ENCODE measurements at regions of chr3 and their contacts with region 1.

Region 1: DNA sequence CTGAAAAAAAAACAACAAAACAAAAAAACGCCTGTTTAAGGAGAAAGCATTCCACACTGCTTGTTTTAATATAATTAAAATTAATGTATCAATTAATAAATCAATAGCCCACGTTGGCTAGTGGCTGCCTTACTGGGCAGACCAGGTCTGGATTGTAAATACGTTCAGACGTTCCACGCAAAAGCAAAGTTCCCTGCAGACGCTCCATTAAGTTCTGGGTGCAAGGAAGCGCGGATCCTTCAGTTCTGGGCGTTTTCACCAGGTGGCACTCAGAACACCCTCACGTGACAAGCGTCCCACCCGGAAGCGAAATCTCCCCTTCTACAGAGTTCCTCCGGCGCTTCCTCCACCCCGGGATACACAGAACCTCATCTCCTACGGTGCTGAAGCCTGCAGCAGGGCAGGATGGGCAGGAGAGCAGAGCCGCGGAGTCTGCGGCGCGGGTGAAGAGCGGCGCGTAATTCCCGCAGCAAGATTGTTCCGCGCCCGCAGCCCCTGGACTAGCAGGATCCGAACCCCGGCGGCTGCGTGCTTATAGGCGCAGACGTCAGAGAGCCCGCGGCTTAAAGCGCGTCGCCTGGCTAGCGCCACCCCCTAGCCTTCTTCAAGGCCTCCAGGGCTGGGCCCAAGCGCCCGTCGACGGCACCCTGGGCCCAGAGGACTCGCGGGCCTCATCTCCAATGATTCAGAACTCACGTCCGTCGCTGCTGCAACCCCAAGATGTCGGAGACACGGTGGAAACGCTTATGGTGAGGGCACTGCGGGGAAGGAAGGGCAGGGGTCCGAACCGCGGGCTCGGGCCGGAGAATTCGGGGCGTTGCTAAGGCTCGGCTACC is at the start of gene SLC25A38:
- DNase-seq: peak; percentile 85
- H3K4me3 Mint-ChIP-seq: peak within 1 kb of the TSS; percentile 91
- H3K27ac Mint-ChIP-seq: peak within 1 kb of the TSS; percentile 91
- H3K4me1 Mint-ChIP-seq: peaks cover 30% of the 10 kb centered on the region
- H3K27me3 Mint-ChIP-seq: no peaks in the 10 kb centered on the region
- CTCF ChIP-seq: peak; percentile 8
- total RNA-seq, gene SLC25A38: 37.6 and 45.9 TPM in 2 replicates

Region 2: GRCh38 chr3:39406368-39407258 is 23.4 kb after region 1 on chr3 and contains the start of gene RPSA:
- CTCF ChIA-PET with region 1: interaction called, 5 read pairs
- POLR2A ChIA-PET with region 1: interaction called, 63 read pairs
- intact Hi-C with region 1: loop called (anchors 2 kb)
- DNase-seq: peak; percentile 97
- H3K4me3 Mint-ChIP-seq: peak within 1 kb of the TSS; percentile 80
- H3K27ac Mint-ChIP-seq: peak within 1 kb of the TSS; percentile 96
- H3K4me1 Mint-ChIP-seq: peaks cover 13% of the 10 kb centered on the region
- H3K27me3 Mint-ChIP-seq: no peaks in the 10 kb centered on the region
- CTCF ChIP-seq: no peak
- total RNA-seq, gene RPSA: 1,984 and 2,115 TPM in 2 replicates

Region 3: GRCh38 chr3:39601241-39601640 is 218.0 kb after region 1 on chr3:
- CTCF ChIA-PET with region 1: no interaction called
- POLR2A ChIA-PET with region 1: no interaction called
- intact Hi-C with region 1: no loop called
- DNase-seq: no peak
- H3K4me3 Mint-ChIP-seq: no peak overlapping the region
- H3K27ac Mint-ChIP-seq: no peak overlapping the region
- H3K4me1 Mint-ChIP-seq: no peaks in the 10 kb centered on the region
- H3K27me3 Mint-ChIP-seq: no peaks in the 10 kb centered on the region
- CTCF ChIP-seq: no peak